ENCODE measurements at regions of chr20 and their contacts with region 1.

Region 1: DNA sequence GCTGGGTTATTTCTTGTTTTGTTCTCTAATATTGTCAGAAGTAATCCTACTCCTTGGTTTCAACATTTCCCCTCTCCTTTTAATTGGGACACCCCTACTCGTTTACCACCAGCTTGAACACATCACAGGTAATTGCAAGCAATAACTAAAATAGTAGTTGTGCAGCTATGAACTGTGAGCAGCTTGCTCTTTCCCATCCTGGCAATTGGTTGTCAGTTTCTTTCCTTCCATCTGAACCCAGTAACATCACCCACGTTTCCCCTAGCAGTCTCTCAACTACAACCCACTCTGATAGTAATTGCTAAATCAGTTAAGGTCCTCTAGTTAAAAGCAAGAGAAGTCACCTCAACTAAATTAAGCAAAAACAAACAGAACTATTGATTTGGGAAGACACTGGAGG is 47.6 kb upstream of the GNRH2 start:
- DNase-seq: no peak
- ATAC-seq: no peak
- H3K4me3 ChIP-seq: no peak overlapping the region
- H3K27ac ChIP-seq: no peak overlapping the region
- H3K4me1 ChIP-seq: no peaks in the 10 kb centered on the region
- H3K27me3 ChIP-seq: no peaks in the 10 kb centered on the region
- CTCF ChIP-seq: no peak

Region 2: GRCh38 chr20:2873010-2873746 is 122.6 kb before region 1 on chr20 and contains the start of gene PTPRA:
- CTCF ChIA-PET with region 1: no interaction called
- POLR2A ChIA-PET with region 1: no interaction called
- intact Hi-C with region 1: loop called (anchors 5 kb)
- DNase-seq: peak; percentile 95
- ATAC-seq: peak; percentile 90
- H3K4me3 ChIP-seq: peak within 1 kb of the TSS; percentile 99
- H3K27ac ChIP-seq: no peak within 1 kb of the TSS; the same call in 1 of the 2 replicates
- H3K4me1 ChIP-seq: peaks cover 40% of the 10 kb centered on the region
- H3K27me3 ChIP-seq: no peaks in the 10 kb centered on the region
- CTCF ChIP-seq: no peak
- total RNA-seq, gene PTPRA: 33.6 and 35.0 TPM in 2 replicates

Region 3: DNA sequence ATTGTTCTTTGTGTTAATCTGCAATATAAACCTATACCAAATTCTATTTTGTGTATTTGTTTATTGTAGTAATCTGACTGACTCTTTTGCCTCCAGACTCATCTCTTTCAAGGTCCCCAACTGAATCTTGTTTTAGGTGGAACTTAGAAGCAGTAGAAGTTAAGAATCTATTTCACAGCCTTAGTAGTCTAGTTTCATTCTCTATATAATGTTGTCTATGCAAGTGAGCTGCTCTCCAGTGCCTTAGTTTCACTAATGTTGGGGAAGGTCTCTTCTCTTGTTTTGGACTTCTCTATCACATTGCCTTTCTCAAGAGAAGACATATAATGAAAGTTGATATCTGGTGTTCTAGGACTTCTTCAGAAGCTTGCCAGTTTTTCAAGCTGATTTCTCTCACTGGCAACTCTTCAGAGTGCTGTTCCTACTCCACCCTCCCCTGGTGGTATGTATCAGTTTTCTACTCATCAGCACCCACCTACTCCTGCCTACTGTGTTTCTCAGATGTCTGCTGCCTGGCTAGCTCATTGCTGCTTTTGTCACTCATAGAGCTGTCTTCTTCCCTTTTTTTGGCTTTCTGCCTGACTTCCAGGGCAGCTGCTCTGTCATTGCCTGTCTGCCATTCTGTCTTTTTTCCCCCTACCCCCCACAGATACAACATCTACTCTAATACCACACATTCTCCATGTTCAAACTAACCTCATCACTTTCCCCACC is 40.4 kb before region 1 on chr20:
- CTCF ChIA-PET with region 1: no interaction called
- POLR2A ChIA-PET with region 1: no interaction called
- intact Hi-C with region 1: no loop called
- DNase-seq: no peak
- ATAC-seq: no peak
- H3K4me3 ChIP-seq: no peak overlapping the region
- H3K27ac ChIP-seq: no peak overlapping the region
- H3K4me1 ChIP-seq: no peaks in the 10 kb centered on the region
- H3K27me3 ChIP-seq: no peaks in the 10 kb centered on the region
- CTCF ChIP-seq: no peak

Measured in PC-3 (cell line).